OCI-LY7 (cell line): ENCODE measurements at regions of chr2 and their contacts with region 1.

Region 1: GRCh38 chr2:233100192-233100998 is 40.3 kb downstream of the INPP5D start:
- DNase-seq: peak; percentile 95
- H3K4me3 ChIP-seq: peak overlapping the region; percentile 60
- H3K27ac ChIP-seq: peak overlapping the region; percentile 98
- H3K4me1 ChIP-seq: peaks cover 69% of the 10 kb centered on the region
- CTCF ChIP-seq: no peak

Region 2: DNA sequence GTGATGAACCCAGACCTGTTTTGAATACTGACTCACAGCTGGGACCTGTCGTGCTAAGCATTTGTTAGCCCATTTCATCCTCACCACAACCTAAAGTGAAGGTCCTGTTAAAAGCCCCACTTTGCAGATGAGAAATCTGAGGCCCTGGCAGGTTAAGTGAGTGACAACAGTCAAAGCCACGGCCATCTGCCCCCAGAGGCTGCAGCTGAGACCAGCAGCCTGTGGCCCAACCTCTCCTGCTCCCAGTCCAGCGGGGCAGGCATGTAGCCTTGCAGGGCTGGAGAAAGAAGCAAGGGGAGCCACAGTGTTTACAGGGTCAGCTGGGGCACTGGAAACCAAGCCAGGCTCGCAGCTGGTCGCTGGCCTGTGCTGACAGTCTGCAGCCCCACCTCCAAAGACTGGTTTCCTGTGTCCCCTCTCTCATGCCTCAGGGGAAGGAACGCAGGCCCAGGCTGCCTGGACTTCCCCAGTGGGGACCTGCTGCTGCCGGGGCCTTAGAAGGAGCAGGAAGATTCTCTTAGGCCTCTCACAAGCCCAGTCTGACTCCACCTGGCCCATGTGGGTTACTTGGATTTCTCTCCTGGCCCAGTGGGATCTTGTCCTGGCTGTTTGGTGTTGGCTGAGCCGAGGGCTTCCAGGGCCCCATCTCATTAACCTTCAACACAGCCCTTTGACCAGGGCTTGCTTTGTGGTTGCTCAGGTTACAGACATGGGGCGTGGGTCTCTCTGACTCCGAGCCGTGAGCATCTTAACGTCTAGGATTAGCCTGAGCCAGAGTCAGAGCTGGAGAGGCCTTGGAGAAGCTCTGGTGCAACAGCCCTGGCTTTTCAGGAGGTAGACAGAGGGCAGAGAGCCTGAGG is 38.6 kb before region 1 on chr2:
- CTCF ChIA-PET with region 1: interaction called, 13 read pairs
- POLR2A ChIA-PET with region 1: interaction called, 20 read pairs
- intact Hi-C with region 1: loop called (anchors 1 kb)
- DNase-seq: peak; percentile 73
- H3K4me3 ChIP-seq: peak overlapping the region; percentile 81
- H3K27ac ChIP-seq: peak overlapping the region; percentile 87
- H3K4me1 ChIP-seq: peaks cover 38% of the 10 kb centered on the region
- CTCF ChIP-seq: peak; percentile 67

Region 3: DNA sequence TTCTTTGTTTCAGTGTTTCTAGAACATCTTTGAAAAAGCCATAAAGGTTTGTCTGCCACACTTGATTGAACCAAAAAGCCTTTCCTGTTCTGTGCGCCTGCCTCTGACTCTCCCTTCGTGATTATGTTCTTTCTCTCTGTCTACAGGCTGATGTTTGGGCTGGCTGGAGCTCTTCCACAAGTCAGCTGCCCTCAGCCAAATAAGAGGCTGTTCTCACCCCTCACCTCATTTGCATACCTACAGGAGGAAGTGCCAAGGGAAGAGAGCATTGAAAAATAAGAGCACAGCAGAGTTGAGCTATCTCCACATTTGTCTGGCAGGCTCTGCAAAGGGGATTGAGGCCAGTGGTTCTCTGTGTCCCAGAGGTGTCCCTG is 24.4 kb before region 1 on chr2:
- CTCF ChIA-PET with region 1: interaction called, 6 read pairs
- POLR2A ChIA-PET with region 1: interaction called, 45 read pairs
- intact Hi-C with region 1: loop called (anchors 1 kb)
- DNase-seq: peak; percentile 93
- H3K4me3 ChIP-seq: peak overlapping the region; percentile 56
- H3K27ac ChIP-seq: peak overlapping the region; percentile 93
- H3K4me1 ChIP-seq: peaks cover 90% of the 10 kb centered on the region
- CTCF ChIP-seq: no peak

Region 4: GRCh38 chr2:233084488-233084887 is 15.9 kb before region 1 on chr2:
- CTCF ChIA-PET with region 1: interaction called, 14 read pairs
- POLR2A ChIA-PET with region 1: interaction called, 34 read pairs
- intact Hi-C with region 1: loop called (anchors 1 kb)
- DNase-seq: peak; percentile 93
- H3K4me3 ChIP-seq: peak overlapping the region; percentile 47
- H3K27ac ChIP-seq: peak overlapping the region; percentile 98
- H3K4me1 ChIP-seq: peaks cover 95% of the 10 kb centered on the region
- CTCF ChIP-seq: no peak

Region 5: GRCh38 chr2:233112776-233113452 is 12.5 kb after region 1 on chr2:
- CTCF ChIA-PET with region 1: no interaction called
- POLR2A ChIA-PET with region 1: interaction called, 13 read pairs
- intact Hi-C with region 1: no loop called
- DNase-seq: no peak
- H3K4me3 ChIP-seq: no peak overlapping the region
- H3K27ac ChIP-seq: no peak overlapping the region
- H3K4me1 ChIP-seq: peaks cover 12% of the 10 kb centered on the region
- CTCF ChIP-seq: no peak

Region 6: DNA sequence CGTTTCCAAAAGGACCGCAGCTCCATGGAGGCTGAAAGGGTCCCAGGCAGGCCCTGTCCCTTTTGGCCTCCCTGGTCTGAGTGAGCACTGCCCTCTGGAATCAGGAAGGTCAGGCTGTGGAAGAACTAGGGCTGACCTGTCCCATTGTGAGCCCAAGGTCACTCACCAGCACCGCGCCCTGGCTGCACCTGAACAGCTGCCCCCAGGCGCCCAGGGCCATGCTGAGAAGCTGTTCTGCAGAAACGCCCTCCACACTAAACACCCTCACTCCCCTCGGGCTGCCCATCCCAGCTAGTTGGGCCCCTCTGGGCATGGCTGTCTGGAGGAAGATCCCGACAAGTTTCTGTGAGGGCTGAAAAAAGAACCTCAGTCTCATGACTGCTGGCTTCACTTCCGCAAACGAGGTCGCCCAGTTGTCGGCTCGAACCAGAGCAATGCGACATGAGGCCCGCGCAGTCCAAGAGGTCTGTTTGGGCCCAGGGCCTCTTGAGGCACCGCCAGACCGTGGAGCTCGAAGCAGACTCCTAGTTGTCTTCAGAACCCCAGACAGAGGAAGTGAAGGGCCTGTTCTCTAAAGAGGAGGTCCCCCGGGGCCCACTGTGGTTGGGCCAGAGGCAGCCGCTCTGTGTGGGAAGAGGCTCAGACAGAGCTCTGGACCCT is 24.2 kb after region 1 on chr2:
- CTCF ChIA-PET with region 1: no interaction called
- POLR2A ChIA-PET with region 1: no interaction called
- intact Hi-C with region 1: loop called (anchors 2 kb)
- DNase-seq: peak; percentile 86
- H3K4me3 ChIP-seq: peak overlapping the region; percentile 57
- H3K27ac ChIP-seq: peak overlapping the region; percentile 80
- H3K4me1 ChIP-seq: peaks cover 22% of the 10 kb centered on the region
- CTCF ChIP-seq: no peak

Region 7: GRCh38 chr2:233185963-233186362 is 85.6 kb after region 1 on chr2:
- CTCF ChIA-PET with region 1: no interaction called
- POLR2A ChIA-PET with region 1: interaction called, 6 read pairs
- intact Hi-C with region 1: loop called (anchors 2 kb)
- DNase-seq: peak; percentile 78
- H3K4me3 ChIP-seq: peak overlapping the region; percentile 37
- H3K27ac ChIP-seq: peak overlapping the region; percentile 78
- H3K4me1 ChIP-seq: peaks cover 25% of the 10 kb centered on the region
- CTCF ChIP-seq: no peak

Region 8: DNA sequence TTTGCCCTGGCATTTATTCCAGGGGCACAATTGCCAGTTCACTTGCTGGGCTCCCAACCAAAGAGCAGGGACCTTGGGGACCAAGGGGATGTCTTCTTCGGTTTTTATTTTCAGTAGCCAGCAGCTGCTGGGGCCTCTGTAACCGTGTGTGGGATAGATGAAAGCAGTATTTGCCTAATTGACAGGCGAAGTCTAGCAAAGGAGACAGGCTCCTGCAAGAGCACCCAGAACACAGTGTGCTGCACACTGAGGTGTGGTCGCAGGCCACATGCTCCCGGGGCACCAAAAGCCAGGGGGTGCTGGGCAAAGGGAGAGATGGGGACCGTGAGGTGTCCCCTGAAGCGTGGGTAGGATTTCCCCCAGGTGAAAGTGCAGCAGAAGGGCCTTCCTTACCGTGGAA is 212.5 kb after region 1 on chr2:
- CTCF ChIA-PET with region 1: no interaction called
- POLR2A ChIA-PET with region 1: no interaction called
- intact Hi-C with region 1: no loop called
- DNase-seq: no peak
- H3K4me3 ChIP-seq: no peak overlapping the region
- H3K27ac ChIP-seq: no peak overlapping the region
- H3K4me1 ChIP-seq: no peaks in the 10 kb centered on the region
- CTCF ChIP-seq: no peak